Spleen (tissue), 13 donors: ENCODE measurements at regions of chr12 and their contacts with region 1.

Region 1: GRCh38 chr12:1583421-1584078 is 10.8 kb downstream of the FBXL14 start:
- DNase-seq: no peak
- H3K4me3 ChIP-seq: peak overlapping the region in 2 of 8 donors; percentile 22 to 45
- H3K27ac ChIP-seq: no peak overlapping the region
- H3K4me1 ChIP-seq: peaks cover 7 to 38% (median 27%) of the 10 kb centered on the region in 6 donors
- H3K27me3 ChIP-seq: no peaks in the 10 kb centered on the region
- CTCF ChIP-seq: peak; percentile 72 to 92 (median 88)
- POLR2A ChIP-seq: no peak

Region 2: GRCh38 chr12:1117970-1118563 is 465.5 kb before region 1 on chr12:
- intact Hi-C with region 1: loop called (anchors 5 kb)
- DNase-seq: peak; percentile 81
- H3K4me3 ChIP-seq: no peak overlapping the region
- H3K27ac ChIP-seq: no peak overlapping the region
- H3K4me1 ChIP-seq: peaks cover 0 to 6% (median 0%) of the 10 kb centered on the region in 6 donors
- H3K27me3 ChIP-seq: no peaks in the 10 kb centered on the region
- CTCF ChIP-seq: peak; percentile 79 to 93 (median 89)
- POLR2A ChIP-seq: no peak

Region 3: GRCh38 chr12:1562813-1563407 is 20.6 kb before region 1 on chr12:
- intact Hi-C with region 1: no loop called
- DNase-seq: no peak
- H3K4me3 ChIP-seq: no peak overlapping the region
- H3K27ac ChIP-seq: no peak overlapping the region
- H3K4me1 ChIP-seq: no peaks in the 10 kb centered on the region
- H3K27me3 ChIP-seq: no peaks in the 10 kb centered on the region
- CTCF ChIP-seq: no peak
- POLR2A ChIP-seq: no peak